ENCODE measurements at regions of chr16 and their contacts with region 1.

Region 1: DNA sequence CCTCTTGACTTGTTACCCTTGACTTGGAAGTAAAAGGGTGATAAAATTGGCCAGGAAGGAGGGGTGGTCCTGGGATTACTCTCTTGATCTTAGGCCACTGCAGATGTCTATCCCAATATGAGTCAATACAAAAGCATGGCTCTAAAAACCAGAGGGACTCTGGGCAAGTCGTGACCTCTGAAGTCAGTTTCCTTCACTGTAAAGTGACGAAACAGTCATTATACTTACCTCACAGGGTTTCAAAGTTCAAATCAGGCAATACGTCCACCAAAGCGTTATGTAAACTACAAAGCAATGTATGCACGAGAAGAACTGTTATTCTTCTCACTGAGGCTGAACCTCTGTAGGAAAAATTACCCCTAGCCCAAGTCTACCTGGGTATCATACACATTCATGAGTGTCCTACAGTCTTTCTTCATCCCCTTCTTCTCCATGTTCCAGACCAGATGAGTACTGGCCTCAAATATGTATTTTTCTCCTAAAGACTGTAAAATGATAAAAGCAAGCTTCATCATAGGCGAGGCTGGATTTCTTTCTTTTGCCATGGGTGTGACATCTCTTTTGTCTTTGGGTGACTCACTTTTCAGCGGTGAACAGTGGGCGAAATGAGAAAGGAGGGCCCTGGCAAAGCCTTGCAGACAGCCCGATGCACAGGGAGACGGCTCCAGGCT is 34.5 kb upstream of the CLEC18B start:
- DNase-seq: peak in 1 of 2 experiments; percentile 45
- H3K4me3 ChIP-seq: no peak overlapping the region
- H3K27ac ChIP-seq: no peak overlapping the region
- H3K4me1 ChIP-seq: 0 out of 2 replicates have a peak, but pooled peaks cover 3% of the 10 kb centered on the region
- H3K27me3 ChIP-seq: no peaks in the 10 kb centered on the region
- CTCF ChIP-seq: no peak

Region 2: DNA sequence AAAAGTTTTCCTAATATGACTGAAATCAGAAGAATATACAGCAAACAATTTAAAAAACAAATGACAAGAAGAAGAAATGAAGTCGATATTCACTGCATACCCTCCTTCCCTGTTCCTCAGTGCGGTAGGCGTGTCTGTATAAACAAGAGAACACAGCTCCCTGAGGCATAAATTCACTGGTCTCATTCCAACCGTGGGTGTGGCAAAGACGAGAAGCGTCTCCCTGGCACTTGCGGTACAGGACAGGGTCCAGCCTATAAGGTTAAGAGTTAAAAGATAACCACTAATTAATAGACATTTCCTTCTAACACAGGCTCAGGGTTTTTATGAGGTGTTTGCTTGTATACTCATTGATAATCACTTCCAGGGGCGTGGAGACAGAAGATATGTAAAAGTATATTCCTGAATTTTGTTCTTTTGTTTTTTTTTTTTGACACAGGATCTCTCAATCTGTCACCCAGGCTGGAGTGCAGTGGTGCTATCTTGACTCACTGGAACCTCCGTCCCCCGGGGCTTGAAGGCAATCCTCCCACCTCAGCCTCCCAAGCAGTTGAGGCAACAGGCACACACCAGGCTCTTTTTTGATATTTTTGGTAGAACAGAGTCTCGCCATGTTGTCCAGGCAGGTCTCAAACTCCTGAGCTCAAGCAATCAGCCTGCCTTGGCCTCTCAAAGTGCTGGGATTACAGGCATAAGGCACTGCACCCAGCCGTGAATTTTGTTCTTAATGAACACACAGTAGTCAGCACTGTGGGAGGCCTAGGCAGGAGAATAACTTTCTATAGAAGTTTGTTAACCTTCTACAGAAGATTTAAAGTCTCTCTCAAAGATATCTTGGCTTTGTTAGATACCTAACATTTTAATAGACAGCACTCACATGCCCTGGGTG is 24.6 kb after region 1 on chr16:
- CTCF ChIA-PET with region 1: no interaction called
- POLR2A ChIA-PET with region 1: no interaction called
- intact Hi-C with region 1: no loop called
- DNase-seq: peak; percentile 80 to 94
- H3K4me3 ChIP-seq: no peak overlapping the region
- H3K27ac ChIP-seq: peak overlapping the region; percentile 62
- H3K4me1 ChIP-seq: peaks cover 29% of the 10 kb centered on the region
- H3K27me3 ChIP-seq: no peaks in the 10 kb centered on the region
- CTCF ChIP-seq: no peak

Region 3: GRCh38 chr16:74557275-74557674 is 101.5 kb after region 1 on chr16:
- CTCF ChIA-PET with region 1: no interaction called
- POLR2A ChIA-PET with region 1: interaction called, 11 read pairs
- intact Hi-C with region 1: no loop called
- DNase-seq: no peak
- H3K4me3 ChIP-seq: no peak overlapping the region
- H3K27ac ChIP-seq: no peak overlapping the region
- H3K4me1 ChIP-seq: no peaks in the 10 kb centered on the region
- H3K27me3 ChIP-seq: no peaks in the 10 kb centered on the region
- CTCF ChIP-seq: no peak

Region 4: GRCh38 chr16:74684131-74684530 is 228.4 kb after region 1 on chr16:
- CTCF ChIA-PET with region 1: no interaction called
- POLR2A ChIA-PET with region 1: no interaction called
- intact Hi-C with region 1: no loop called
- DNase-seq: no peak
- H3K4me3 ChIP-seq: no peak overlapping the region
- H3K27ac ChIP-seq: no peak overlapping the region
- H3K4me1 ChIP-seq: no peaks in the 10 kb centered on the region
- H3K27me3 ChIP-seq: no peaks in the 10 kb centered on the region
- CTCF ChIP-seq: no peak

Region 5: GRCh38 chr16:74709441-74709877 is 253.7 kb after region 1 on chr16:
- CTCF ChIA-PET with region 1: no interaction called
- POLR2A ChIA-PET with region 1: no interaction called
- intact Hi-C with region 1: no loop called
- DNase-seq: peak; percentile 79 to 81
- H3K4me3 ChIP-seq: no peak overlapping the region
- H3K27ac ChIP-seq: no peak overlapping the region
- H3K4me1 ChIP-seq: peaks cover 4% of the 10 kb centered on the region; the same call in 1 of the 2 replicates
- H3K27me3 ChIP-seq: no peaks in the 10 kb centered on the region
- CTCF ChIP-seq: peak; percentile 98

Measured in PC-9 (cell line).